ENCODE measurements at regions of chr11 and their contacts with region 1.

Region 1: GRCh38 chr11:6251120-6251733 is 8.4 kb upstream of the CCKBR start:
- DNase-seq: peak; percentile 50
- H3K4me3 ChIP-seq: no peak overlapping the region
- CTCF ChIP-seq: peak; percentile 97

Region 2: DNA sequence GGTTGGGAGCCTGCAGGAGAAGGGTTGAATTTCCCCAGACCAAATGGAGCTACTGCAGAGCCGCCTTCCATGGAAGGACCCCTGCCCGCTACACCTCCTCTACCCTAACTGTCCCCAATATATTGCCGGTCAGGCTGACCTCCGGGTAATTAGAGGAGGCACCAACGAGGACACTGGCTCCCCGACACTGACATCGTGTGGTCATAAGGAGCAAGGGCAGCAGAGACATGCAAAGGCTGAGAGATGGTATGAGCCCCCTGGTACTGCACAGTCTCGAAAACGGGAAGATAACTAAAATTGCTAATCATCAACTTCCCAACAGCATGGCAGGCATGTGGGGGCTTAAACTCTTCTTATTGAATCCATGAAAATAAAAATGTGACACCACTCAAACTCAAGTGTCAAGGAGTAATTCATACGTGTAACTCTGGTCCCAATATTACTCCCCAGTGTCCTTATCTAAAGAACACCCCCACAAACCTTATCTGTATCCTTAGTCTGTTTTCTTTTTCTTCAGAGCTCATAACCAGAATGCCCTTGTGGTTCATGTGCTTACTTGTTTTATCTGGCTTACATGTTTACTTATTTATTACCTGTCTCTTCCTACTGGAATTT is 64.7 kb after region 1 on chr11:
- in situ Hi-C with region 1: no loop called
- DNase-seq: no peak
- H3K4me3 ChIP-seq: no peak overlapping the region
- CTCF ChIP-seq: peak; percentile 94

Region 3: GRCh38 chr11:6345366-6345765 is 94.1 kb after region 1 on chr11:
- in situ Hi-C with region 1: loop called (anchors 10 kb)
- DNase-seq: no peak
- H3K4me3 ChIP-seq: no peak overlapping the region
- CTCF ChIP-seq: no peak